CD4-positive, alpha-beta memory T cell (primary cell): ENCODE measurements at regions of chr7 and their contacts with region 1.

Region 1: GRCh38 chr7:19713676-19714075 is 4.8 kb upstream of the POLR1F start:
- DNase-seq: peak; percentile 39 to 59 (median 49)
- H3K4me3 ChIP-seq: no peak overlapping the region
- H3K4me3 Mint-ChIP-seq: no peak overlapping the region
- H3K27ac ChIP-seq: no peak overlapping the region
- H3K27ac Mint-ChIP-seq: peak overlapping the region in 1 of 7 donors; percentile 54
- H3K4me1 ChIP-seq: peaks cover 9% of the 10 kb centered on the region
- H3K4me1 Mint-ChIP-seq: peaks cover 10 to 16% (median 14%) of the 10 kb centered on the region in 4 donors
- H3K27me3 ChIP-seq: no peaks in the 10 kb centered on the region
- H3K27me3 Mint-ChIP-seq: peaks cover 0 to 9% of the 10 kb centered on the region in 2 donors

Region 2: GRCh38 chr7:19725770-19726169 is 12.1 kb after region 1 on chr7:
- CTCF ChIA-PET with region 1: interaction called, 14 read pairs
- POLR2A ChIA-PET with region 1: no interaction called
- intact Hi-C with region 1: no loop called
- DNase-seq: no peak
- H3K4me3 ChIP-seq: no peak overlapping the region
- H3K4me3 Mint-ChIP-seq: no peak overlapping the region
- H3K27ac ChIP-seq: no peak overlapping the region
- H3K27ac Mint-ChIP-seq: no peak overlapping the region
- H3K4me1 ChIP-seq: no peaks in the 10 kb centered on the region
- H3K4me1 Mint-ChIP-seq: no peaks in the 10 kb centered on the region
- H3K27me3 ChIP-seq: no peaks in the 10 kb centered on the region
- H3K27me3 Mint-ChIP-seq: peaks cover 9 to 21% of the 10 kb centered on the region in 2 donors

Region 3: GRCh38 chr7:19747740-19748339 is 34.2 kb after region 1 on chr7:
- CTCF ChIA-PET with region 1: interaction called, 11 read pairs
- POLR2A ChIA-PET with region 1: no interaction called
- intact Hi-C with region 1: loop called (anchors 2 kb)
- DNase-seq: peak in 3 of 5 donors; percentile 2 to 5 (median 2)
- H3K4me3 ChIP-seq: no peak overlapping the region
- H3K4me3 Mint-ChIP-seq: no peak overlapping the region
- H3K27ac ChIP-seq: no peak overlapping the region
- H3K27ac Mint-ChIP-seq: no peak overlapping the region
- H3K4me1 ChIP-seq: no peaks in the 10 kb centered on the region
- H3K4me1 Mint-ChIP-seq: no peaks in the 10 kb centered on the region
- H3K27me3 ChIP-seq: no peaks in the 10 kb centered on the region
- H3K27me3 Mint-ChIP-seq: peaks cover 1 to 3% of the 10 kb centered on the region in 2 donors

Region 4: GRCh38 chr7:19830604-19831003 is 116.9 kb after region 1 on chr7:
- CTCF ChIA-PET with region 1: no interaction called
- POLR2A ChIA-PET with region 1: no interaction called
- intact Hi-C with region 1: no loop called
- DNase-seq: no peak
- H3K4me3 ChIP-seq: no peak overlapping the region
- H3K4me3 Mint-ChIP-seq: no peak overlapping the region
- H3K27ac ChIP-seq: no peak overlapping the region
- H3K27ac Mint-ChIP-seq: no peak overlapping the region
- H3K4me1 ChIP-seq: no peaks in the 10 kb centered on the region
- H3K4me1 Mint-ChIP-seq: no peaks in the 10 kb centered on the region
- H3K27me3 ChIP-seq: no peaks in the 10 kb centered on the region
- H3K27me3 Mint-ChIP-seq: no peaks in the 10 kb centered on the region

Region 5: GRCh38 chr7:20598459-20599309 is 885.0 kb after region 1 on chr7:
- CTCF ChIA-PET with region 1: interaction called, 172 read pairs
- POLR2A ChIA-PET with region 1: no interaction called
- intact Hi-C with region 1: loop called (anchors 1 kb)
- DNase-seq: peak in 4 of 5 donors; percentile 27 to 38 (median 31)
- H3K4me3 ChIP-seq: no peak overlapping the region
- H3K4me3 Mint-ChIP-seq: no peak overlapping the region
- H3K27ac ChIP-seq: no peak overlapping the region
- H3K27ac Mint-ChIP-seq: peak overlapping the region in 1 of 7 donors; percentile 0
- H3K4me1 ChIP-seq: no peaks in the 10 kb centered on the region
- H3K4me1 Mint-ChIP-seq: peaks cover 0 to 6% (median 0%) of the 10 kb centered on the region in 4 donors
- H3K27me3 ChIP-seq: no peaks in the 10 kb centered on the region
- H3K27me3 Mint-ChIP-seq: peaks cover 2 to 7% of the 10 kb centered on the region in 2 donors